ENCODE measurements at regions of chr1 and their contacts with region 1.

Region 1: GRCh38 chr1:31054349-31054748 is 11.2 kb downstream of the PUM1 start:
- DNase-seq: no peak
- H3K4me3 ChIP-seq: no peak overlapping the region
- H3K27ac ChIP-seq: no peak overlapping the region
- H3K4me1 ChIP-seq: no peaks in the 10 kb centered on the region
- H3K27me3 ChIP-seq: no peaks in the 10 kb centered on the region
- CTCF ChIP-seq: no peak

Region 2: DNA sequence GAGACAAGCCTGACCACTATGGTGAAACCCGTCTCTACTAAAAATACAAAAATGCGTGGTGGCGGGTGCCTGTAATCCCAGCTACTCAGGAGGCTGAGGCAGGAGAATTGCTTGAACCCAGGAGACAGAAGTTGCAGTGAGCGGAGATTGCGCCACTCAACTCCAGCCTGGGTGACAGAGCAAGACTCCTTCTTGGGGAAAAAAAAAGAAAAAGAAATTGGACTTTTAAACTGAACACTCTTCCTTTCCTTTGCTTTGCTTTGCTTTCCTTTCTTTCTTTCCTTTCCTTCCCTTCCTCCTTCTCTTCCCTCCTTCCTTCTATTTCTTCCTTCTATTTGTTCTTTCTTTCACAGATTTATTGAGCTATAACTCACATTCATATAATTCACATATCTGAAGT is 54.5 kb after region 1 on chr1:
- CTCF ChIA-PET with region 1: interaction called, 14 read pairs
- POLR2A ChIA-PET with region 1: no interaction called
- intact Hi-C with region 1: no loop called
- DNase-seq: no peak
- H3K4me3 ChIP-seq: no peak overlapping the region
- H3K27ac ChIP-seq: no peak overlapping the region
- H3K4me1 ChIP-seq: peaks cover 5% of the 10 kb centered on the region
- H3K27me3 ChIP-seq: no peaks in the 10 kb centered on the region
- CTCF ChIP-seq: no peak

Region 3: GRCh38 chr1:31354283-31354682 is 299.9 kb after region 1 on chr1:
- CTCF ChIA-PET with region 1: no interaction called
- POLR2A ChIA-PET with region 1: no interaction called
- intact Hi-C with region 1: no loop called
- DNase-seq: no peak
- H3K4me3 ChIP-seq: no peak overlapping the region
- H3K27ac ChIP-seq: no peak overlapping the region
- H3K4me1 ChIP-seq: no peaks in the 10 kb centered on the region
- H3K27me3 ChIP-seq: no peaks in the 10 kb centered on the region
- CTCF ChIP-seq: no peak

Measured in A673 (cell line).